Vagina (tissue), 2 donors: ENCODE measurements at regions of chr11 and their contacts with region 1.

Region 1: DNA sequence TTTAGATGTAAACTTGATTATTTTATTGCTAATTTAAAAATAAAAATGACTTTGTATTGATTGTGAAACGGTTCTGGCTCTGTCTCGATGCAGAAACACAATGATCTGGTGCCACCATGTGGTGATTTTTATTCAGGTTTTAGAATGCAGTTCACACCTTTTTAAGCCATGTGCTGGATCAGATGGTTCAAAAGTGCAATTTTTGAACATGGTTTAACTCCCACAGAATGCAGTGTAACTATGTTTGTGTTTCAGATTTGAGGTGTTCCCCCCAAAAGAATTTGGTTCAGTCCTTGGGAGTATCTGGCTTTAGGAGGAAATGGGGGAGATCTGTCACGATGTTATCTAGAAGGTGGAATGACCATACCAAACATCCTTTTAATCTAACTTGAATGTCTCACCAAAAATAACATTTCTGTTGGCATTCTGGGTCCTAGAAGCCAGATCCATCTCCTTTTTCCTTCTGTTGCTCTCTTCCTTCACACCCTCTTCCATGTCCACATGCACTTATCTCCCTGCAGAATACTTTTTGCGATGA is 7.9 kb downstream of the MRPL16 start:
- DNase-seq: no peak
- H3K4me3 ChIP-seq: no peak overlapping the region
- H3K27ac ChIP-seq: peak overlapping the region; percentile 4
- H3K4me1 ChIP-seq: no peaks in the 10 kb centered on the region
- H3K27me3 ChIP-seq: no peaks in the 10 kb centered on the region
- CTCF ChIP-seq: peak; percentile 50 to 68 (median 54)
- POLR2A ChIP-seq: no peak

Region 2: GRCh38 chr11:59668950-59669610 is 133.6 kb before region 1 on chr11 and contains the start of gene PATL1:
- intact Hi-C with region 1: loop called (anchors 10 kb)
- DNase-seq: peak; percentile 98 to 99
- H3K4me3 ChIP-seq: peak within 1 kb of the TSS; percentile 85 to 95
- H3K27ac ChIP-seq: peak within 1 kb of the TSS; percentile 99
- H3K4me1 ChIP-seq: peaks cover 28% of the 10 kb centered on the region
- H3K27me3 ChIP-seq: no peaks in the 10 kb centered on the region
- CTCF ChIP-seq: no peak
- POLR2A ChIP-seq: peak; percentile 43 to 96
- total RNA-seq, gene PATL1: 14.5 TPM

Region 3: DNA sequence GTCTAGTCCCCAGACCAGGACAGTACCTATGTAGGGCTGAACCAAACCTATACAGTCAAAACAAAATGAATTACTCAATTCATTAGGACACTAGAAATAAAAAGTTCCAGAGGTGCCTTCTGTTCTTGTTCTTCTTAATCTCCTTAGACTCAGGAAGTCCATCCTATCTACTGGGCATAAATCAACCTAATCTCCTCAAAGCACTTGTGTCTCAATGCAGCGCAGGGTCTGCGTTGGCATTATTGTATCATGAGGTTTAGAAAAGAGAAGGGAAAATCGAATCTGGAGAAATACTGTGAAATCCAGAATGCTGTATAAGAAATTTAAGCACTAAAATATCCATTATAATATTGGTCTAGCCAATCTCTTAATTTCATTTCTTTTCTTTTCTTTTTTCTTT is 86.7 kb before region 1 on chr11:
- intact Hi-C with region 1: no loop called
- DNase-seq: no peak
- H3K4me3 ChIP-seq: no peak overlapping the region
- H3K27ac ChIP-seq: no peak overlapping the region
- H3K4me1 ChIP-seq: no peaks in the 10 kb centered on the region
- H3K27me3 ChIP-seq: no peaks in the 10 kb centered on the region
- CTCF ChIP-seq: no peak
- POLR2A ChIP-seq: no peak

Region 4: DNA sequence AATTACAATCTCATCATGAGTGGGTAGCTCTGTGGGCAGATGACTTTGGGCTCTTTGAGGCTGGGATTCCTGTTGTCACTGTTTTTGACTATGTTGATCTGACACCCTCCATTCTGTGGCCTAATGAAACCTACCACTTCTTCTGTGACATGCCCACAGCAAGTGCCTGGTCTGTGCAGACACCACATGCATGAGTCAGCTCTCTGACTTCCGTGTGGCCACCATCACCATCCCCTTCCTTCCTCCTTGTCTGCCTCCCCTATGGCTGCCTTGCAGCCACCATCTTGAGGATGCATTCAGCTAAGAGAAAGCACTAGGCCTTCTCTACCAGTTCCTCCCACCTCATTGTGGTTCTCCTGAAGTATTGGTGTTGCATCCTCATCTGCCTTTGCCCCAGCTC is 73.8 kb before region 1 on chr11:
- intact Hi-C with region 1: no loop called
- DNase-seq: no peak
- H3K4me3 ChIP-seq: no peak overlapping the region
- H3K27ac ChIP-seq: no peak overlapping the region
- H3K4me1 ChIP-seq: no peaks in the 10 kb centered on the region
- H3K27me3 ChIP-seq: no peaks in the 10 kb centered on the region
- CTCF ChIP-seq: no peak
- POLR2A ChIP-seq: no peak

Region 5: DNA sequence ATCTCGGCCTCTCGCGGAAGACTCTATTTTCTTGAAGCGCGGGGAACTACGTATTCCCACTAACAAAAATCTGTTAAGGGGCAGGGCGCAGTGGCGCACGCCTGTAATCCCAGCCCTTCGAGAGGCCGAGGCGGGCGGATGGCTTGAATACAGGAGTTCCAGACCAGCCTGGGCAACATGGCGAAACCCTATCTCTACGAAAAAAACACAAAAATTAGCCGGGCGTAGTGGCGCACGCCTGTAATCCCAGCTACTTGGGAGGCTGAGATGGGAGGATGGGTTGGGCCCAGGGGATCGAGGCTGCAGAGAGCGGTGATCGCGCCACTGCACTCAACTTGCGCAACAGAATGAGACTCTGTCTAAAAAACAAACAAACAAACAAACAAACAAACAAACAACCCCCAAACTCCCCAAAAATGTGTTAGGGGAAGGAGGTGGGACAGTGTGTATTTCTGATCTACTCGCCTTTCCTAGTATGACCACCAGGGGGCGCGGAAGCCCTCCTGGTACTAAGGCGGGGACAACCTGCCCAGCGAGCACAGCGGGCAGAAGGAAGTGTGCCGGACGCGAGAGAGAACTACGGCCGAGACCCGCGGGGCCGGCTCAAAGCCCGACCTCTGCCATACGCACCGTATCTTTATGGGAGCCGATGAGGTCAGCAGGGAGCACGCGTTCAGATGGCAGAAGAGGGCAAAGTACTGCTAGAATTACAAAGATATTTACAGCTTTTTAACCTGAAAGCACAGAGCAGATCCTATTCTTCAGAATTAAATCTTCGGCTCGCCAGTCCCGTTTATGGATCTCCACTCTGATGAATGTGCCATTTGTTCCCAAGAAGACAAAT is 48.8 kb before region 1 on chr11:
- intact Hi-C with region 1: loop called (anchors 2 kb)
- DNase-seq: no peak
- H3K4me3 ChIP-seq: peak overlapping the region; percentile 60 to 97
- H3K27ac ChIP-seq: peak overlapping the region; percentile 100
- H3K4me1 ChIP-seq: peaks cover 28% of the 10 kb centered on the region
- H3K27me3 ChIP-seq: no peaks in the 10 kb centered on the region
- CTCF ChIP-seq: peak; percentile 93 to 95 (median 94)
- POLR2A ChIP-seq: no peak